IMR-90 (cell line): ENCODE measurements at regions of chr6 and their contacts with region 1.

Region 1: DNA sequence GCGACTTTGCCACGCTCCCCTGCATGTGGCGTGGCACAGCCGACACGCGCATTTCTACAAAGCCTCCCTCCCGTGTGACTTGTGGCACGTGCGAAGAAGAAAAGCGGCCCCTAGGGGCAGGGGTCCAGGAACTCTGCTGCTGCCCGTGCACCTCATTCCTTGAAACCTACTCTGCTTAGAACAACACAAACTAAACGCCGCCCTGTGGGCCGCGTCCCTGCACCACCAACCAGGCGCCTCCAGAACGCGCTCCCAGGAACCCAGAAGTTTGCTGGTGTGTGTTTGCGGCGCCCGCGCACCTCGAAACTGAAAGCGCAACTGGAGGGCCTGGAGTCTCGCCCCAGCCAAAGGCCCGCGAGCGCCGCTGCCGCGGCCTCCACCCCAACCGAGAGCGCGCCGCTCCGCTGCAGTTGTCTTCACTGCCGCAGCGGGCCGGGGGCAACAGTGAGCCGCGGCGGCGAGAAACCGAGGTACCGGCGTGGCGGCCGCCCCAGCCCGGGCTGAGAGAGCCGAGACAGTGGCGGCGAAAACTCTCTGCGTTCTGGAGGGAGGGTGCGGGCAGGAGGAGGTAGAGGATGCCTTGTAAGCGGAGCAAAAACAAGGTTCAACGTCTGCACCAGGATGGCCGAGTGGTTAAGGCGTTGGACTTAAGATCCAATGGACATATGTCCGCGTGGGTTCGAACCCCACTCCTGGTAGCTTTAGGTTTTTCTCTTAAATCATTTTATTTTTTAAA is 65.8 kb downstream of the STX11 start:
- DNase-seq: peak; percentile 98
- ATAC-seq: peak; percentile 89
- H3K4me3 ChIP-seq: peak overlapping the region; percentile 58
- H3K27ac ChIP-seq: peak overlapping the region; percentile 72
- H3K4me1 ChIP-seq: peaks cover 8% of the 10 kb centered on the region
- H3K27me3 ChIP-seq: no peaks in the 10 kb centered on the region
- CTCF ChIP-seq: peak; percentile 83
- POLR2A ChIP-seq: 0 out of 2 replicates have a peak, but pooled peaks have one; percentile 33
- RAD21 ChIP-seq: peak; percentile 81

Region 2: GRCh38 chr6:143772116-143773086 is 443.7 kb before region 1 on chr6:
- CTCF ChIA-PET with region 1: no interaction called
- POLR2A ChIA-PET with region 1: no interaction called
- dilution Hi-C with region 1: no loop called
- in situ Hi-C with region 1: no loop called
- intact Hi-C with region 1: no loop called
- DNase-seq: no peak
- ATAC-seq: no peak
- H3K4me3 ChIP-seq: no peak overlapping the region
- H3K27ac ChIP-seq: no peak overlapping the region
- H3K4me1 ChIP-seq: peaks cover 8% of the 10 kb centered on the region; the same call in 1 of the 2 replicates
- H3K27me3 ChIP-seq: no peaks in the 10 kb centered on the region
- CTCF ChIP-seq: no peak
- POLR2A ChIP-seq: no peak
- RAD21 ChIP-seq: no peak

Region 3: GRCh38 chr6:144149891-144150709 is 66.0 kb before region 1 on chr6 and contains the start of gene STX11:
- CTCF ChIA-PET with region 1: no interaction called
- POLR2A ChIA-PET with region 1: no interaction called
- dilution Hi-C with region 1: no loop called
- in situ Hi-C with region 1: no loop called
- intact Hi-C with region 1: loop called (anchors 1 kb)
- DNase-seq: peak; percentile 29
- ATAC-seq: peak; percentile 92
- H3K4me3 ChIP-seq: peak within 1 kb of the TSS; percentile 84
- H3K27ac ChIP-seq: no peak within 1 kb of the TSS; the same call in 1 of the 2 replicates
- H3K4me1 ChIP-seq: peaks cover 3% of the 10 kb centered on the region; the same call in 1 of the 2 replicates
- H3K27me3 ChIP-seq: peaks cover 13% of the 10 kb centered on the region
- CTCF ChIP-seq: no peak
- POLR2A ChIP-seq: no peak
- RAD21 ChIP-seq: no peak
- total RNA-seq, gene STX11: 0.54 and 0.56 TPM in 2 replicates

Region 4: DNA sequence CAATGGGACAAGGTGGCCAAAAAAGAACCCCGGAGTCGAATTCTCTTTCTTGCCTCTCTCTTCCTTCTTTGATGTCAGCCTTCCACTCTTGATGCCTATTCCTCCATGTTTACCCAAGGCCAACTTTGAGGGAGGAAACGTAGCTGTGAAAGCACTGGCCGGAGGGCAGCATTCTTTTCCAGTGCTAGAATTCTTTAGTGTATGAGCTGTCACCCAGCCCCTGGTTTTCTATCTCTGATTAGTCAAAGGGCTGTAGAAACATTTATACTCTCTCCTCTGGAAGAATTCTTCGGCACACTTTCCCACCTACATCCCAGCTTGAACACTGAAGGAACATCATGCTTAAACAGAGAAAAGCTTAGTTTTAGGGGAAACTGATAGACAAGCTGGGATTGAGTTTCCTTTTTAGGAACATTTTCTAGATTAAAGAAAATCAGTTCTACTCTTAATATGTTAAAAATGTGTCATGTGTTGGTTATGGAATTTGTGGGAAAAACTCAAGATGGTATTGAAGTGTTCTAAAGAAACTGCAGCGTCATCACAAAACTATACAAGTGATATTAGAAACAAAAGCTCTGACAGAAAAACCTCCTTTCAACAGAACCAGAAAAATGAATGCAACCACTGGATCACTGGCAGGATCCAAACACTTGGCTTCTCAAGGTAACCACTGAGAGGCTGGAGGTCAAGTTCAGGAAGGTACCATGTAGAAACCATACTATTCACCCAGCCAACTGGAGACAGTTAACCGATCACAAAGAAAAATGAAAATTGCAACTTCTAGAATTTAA is 48.4 kb after region 1 on chr6:
- CTCF ChIA-PET with region 1: no interaction called
- POLR2A ChIA-PET with region 1: no interaction called
- dilution Hi-C with region 1: no loop called
- in situ Hi-C with region 1: no loop called
- intact Hi-C with region 1: loop called (anchors 1 kb)
- DNase-seq: peak; percentile 90
- ATAC-seq: peak; percentile 87
- H3K4me3 ChIP-seq: no peak overlapping the region
- H3K27ac ChIP-seq: peak overlapping the region; percentile 87
- H3K4me1 ChIP-seq: peaks cover 11% of the 10 kb centered on the region
- H3K27me3 ChIP-seq: no peaks in the 10 kb centered on the region
- CTCF ChIP-seq: no peak
- POLR2A ChIP-seq: no peak
- RAD21 ChIP-seq: no peak

Region 5: DNA sequence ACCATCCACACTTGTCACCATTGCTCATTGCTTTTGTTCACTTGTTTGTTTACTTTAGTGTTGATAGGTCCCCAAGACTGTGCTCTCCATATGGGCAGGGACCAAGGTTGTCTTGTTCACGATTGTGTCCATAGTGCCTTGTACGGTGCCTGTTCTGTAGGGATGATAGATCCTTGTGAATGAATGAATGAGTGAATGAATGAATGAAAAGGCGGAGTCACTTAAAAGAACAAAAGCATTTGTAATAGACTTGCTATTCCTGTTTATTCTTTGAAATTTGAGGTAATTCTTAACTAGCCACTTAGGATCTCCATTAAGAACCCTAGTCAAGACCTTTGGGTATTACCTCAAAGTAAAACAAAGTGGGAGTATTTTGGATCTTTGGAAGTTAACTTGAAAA is 116.1 kb after region 1 on chr6:
- CTCF ChIA-PET with region 1: no interaction called
- POLR2A ChIA-PET with region 1: no interaction called
- dilution Hi-C with region 1: no loop called
- in situ Hi-C with region 1: no loop called
- intact Hi-C with region 1: no loop called
- DNase-seq: no peak
- ATAC-seq: no peak
- H3K4me3 ChIP-seq: no peak overlapping the region
- H3K27ac ChIP-seq: no peak overlapping the region
- H3K4me1 ChIP-seq: peaks cover 10% of the 10 kb centered on the region
- H3K27me3 ChIP-seq: no peaks in the 10 kb centered on the region
- CTCF ChIP-seq: no peak
- POLR2A ChIP-seq: no peak
- RAD21 ChIP-seq: no peak

Region 6: GRCh38 chr6:144482142-144482541 is 266.0 kb after region 1 on chr6:
- CTCF ChIA-PET with region 1: interaction called, 3 read pairs
- POLR2A ChIA-PET with region 1: interaction called, 3 read pairs
- dilution Hi-C with region 1: no loop called
- in situ Hi-C with region 1: no loop called
- intact Hi-C with region 1: loop called (anchors 1 kb)
- DNase-seq: peak; percentile 81
- ATAC-seq: peak; percentile 62
- H3K4me3 ChIP-seq: no peak overlapping the region
- H3K27ac ChIP-seq: no peak overlapping the region
- H3K4me1 ChIP-seq: peaks cover 4% of the 10 kb centered on the region
- H3K27me3 ChIP-seq: no peaks in the 10 kb centered on the region
- CTCF ChIP-seq: peak; percentile 69
- POLR2A ChIP-seq: no peak
- RAD21 ChIP-seq: peak; percentile 74